CD14-positive monocyte (primary cell): ENCODE measurements at regions of chr11 and their contacts with region 1.

Region 1: GRCh38 chr11:3109921-3110706 is 52.9 kb upstream of the CARS1 start:
- DNase-seq: peak; percentile 29 to 48 (median 35)
- H3K4me3 ChIP-seq: no peak overlapping the region
- H3K4me3 Mint-ChIP-seq: no peak overlapping the region
- H3K27ac ChIP-seq: no peak overlapping the region
- H3K27ac Mint-ChIP-seq: peak overlapping the region in 3 of 7 donors; percentile 15 to 68 (median 63)
- H3K4me1 ChIP-seq: peaks cover 31 to 46% of the 10 kb centered on the region in 2 donors
- H3K4me1 Mint-ChIP-seq: peaks cover 37% of the 10 kb centered on the region
- H3K27me3 ChIP-seq: no peaks in the 10 kb centered on the region
- H3K27me3 Mint-ChIP-seq: peaks cover 0 to 6% (median 2%) of the 10 kb centered on the region in 3 donors
- CTCF ChIP-seq: peak; percentile 81

Region 2: GRCh38 chr11:3091791-3092602 is 18.1 kb before region 1 on chr11:
- intact Hi-C with region 1: no loop called
- DNase-seq: peak; percentile 56 to 78 (median 68)
- H3K4me3 ChIP-seq: no peak overlapping the region
- H3K4me3 Mint-ChIP-seq: no peak overlapping the region
- H3K27ac ChIP-seq: no peak overlapping the region
- H3K27ac Mint-ChIP-seq: peak overlapping the region in 1 of 7 donors; percentile 71
- H3K4me1 ChIP-seq: peaks cover 4 to 6% of the 10 kb centered on the region in 2 donors
- H3K4me1 Mint-ChIP-seq: peaks cover 10% of the 10 kb centered on the region
- H3K27me3 ChIP-seq: no peaks in the 10 kb centered on the region
- H3K27me3 Mint-ChIP-seq: no peaks in the 10 kb centered on the region
- CTCF ChIP-seq: peak; percentile 100

Region 3: DNA sequence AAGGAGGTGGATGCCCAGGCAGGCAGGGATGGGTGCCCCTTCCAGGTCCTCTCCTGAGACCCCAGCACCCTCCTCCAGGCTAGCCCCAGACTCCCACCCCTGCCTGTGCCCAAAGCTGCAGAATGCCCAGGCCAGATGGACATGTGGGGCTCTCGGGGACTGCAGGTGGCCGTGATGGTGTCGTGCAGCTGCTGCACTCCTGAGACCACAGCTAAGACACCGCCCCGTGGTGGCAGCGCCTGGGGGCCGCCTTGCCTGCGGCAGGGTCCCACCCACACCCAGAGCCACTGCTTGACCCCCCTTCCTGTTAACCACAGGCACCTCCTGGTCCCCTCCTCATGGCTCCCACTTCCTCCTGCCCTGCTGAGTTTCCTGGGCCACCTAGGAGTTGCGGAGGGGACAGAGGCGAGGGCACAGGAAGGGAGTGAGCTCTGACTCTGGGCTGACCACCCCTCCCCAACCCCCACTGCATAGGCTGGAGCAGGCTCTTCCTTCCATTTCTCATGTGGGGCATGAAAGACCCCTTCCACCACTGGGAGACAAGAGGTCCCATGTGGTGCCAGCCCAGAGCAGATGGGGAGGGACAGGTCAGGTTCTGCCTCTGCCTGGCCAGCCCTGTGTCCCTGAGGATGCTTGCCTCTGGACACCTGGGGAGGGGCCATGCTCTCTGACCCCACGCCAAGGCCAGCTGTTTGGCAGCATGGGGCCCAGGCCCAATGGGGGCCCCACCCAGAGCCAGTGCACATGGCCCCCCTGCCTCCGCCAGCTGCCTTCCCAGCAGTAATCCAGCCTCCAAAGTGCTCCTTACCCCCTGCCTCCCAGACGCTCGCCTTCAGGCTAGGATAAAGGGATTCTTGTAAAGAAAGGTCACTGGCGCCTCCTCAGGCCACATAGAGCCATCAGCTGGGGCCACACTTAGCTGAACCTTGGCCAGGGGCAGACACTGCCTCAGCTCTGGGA is 25.6 kb after region 1 on chr11:
- intact Hi-C with region 1: no loop called
- DNase-seq: peak in 1 of 3 donors; percentile 6
- H3K4me3 ChIP-seq: no peak overlapping the region
- H3K4me3 Mint-ChIP-seq: no peak overlapping the region
- H3K27ac ChIP-seq: peak overlapping the region in 1 of 2 donors; percentile 22
- H3K27ac Mint-ChIP-seq: peak overlapping the region in 2 of 7 donors; percentile 20 to 68
- H3K4me1 ChIP-seq: peaks cover 47 to 71% of the 10 kb centered on the region in 2 donors
- H3K4me1 Mint-ChIP-seq: peaks cover 48% of the 10 kb centered on the region
- H3K27me3 ChIP-seq: no peaks in the 10 kb centered on the region
- H3K27me3 Mint-ChIP-seq: peaks cover 0 to 3% (median 2%) of the 10 kb centered on the region in 3 donors
- CTCF ChIP-seq: no peak

Region 4: DNA sequence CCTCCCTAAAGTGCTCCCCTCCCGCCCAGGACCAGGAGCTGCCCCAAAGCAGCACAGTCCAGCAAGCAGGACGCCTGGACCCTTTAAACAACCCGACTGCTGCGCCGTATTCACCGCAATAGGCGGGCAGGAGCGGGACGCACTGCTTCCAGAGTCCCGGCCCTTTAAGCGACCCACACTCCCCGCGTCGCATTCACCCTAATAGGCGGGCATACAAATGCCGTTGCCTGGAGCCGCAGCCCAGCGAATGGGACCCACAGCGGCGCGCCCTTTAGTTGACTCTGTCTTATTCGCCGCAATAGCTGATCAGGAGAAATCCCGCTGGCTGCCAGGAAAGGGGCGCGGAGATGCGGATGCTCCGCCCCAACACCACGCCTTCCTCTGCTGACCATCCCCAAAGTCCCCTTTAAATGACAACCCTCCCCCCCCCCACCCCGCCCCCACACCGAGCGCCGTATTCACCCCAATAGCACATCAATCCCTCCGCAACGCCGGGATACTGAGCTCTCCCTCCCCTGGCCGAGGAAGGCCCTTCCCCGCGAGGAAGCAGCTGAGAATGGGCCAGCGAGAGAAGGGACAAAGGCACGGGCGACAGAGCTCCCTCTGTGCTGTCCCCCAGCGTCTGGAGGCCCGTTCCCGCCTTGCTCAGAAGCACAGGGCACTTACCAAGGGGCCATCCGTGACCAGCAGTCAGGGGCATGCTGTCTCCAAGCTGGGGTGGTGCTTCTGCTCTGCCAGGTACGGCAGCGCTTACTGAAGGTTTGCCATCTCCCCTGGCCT is 50.3 kb after region 1 on chr11:
- intact Hi-C with region 1: loop called in 1 of 2 experiments (anchors 5 kb)
- DNase-seq: peak in 1 of 3 donors; percentile 39
- H3K4me3 ChIP-seq: peak overlapping the region; percentile 7 to 60 (median 7)
- H3K4me3 Mint-ChIP-seq: peak overlapping the region; percentile 73 to 83
- H3K27ac ChIP-seq: no peak overlapping the region
- H3K27ac Mint-ChIP-seq: peak overlapping the region in 2 of 7 donors; percentile 8 to 30
- H3K4me1 ChIP-seq: peaks cover 61 to 92% of the 10 kb centered on the region in 2 donors
- H3K4me1 Mint-ChIP-seq: peaks cover 81% of the 10 kb centered on the region
- H3K27me3 ChIP-seq: no peaks in the 10 kb centered on the region
- H3K27me3 Mint-ChIP-seq: peaks cover 1 to 4% (median 4%) of the 10 kb centered on the region in 3 donors
- CTCF ChIP-seq: no peak

Region 5: GRCh38 chr11:3217676-3218482 is 107.8 kb after region 1 on chr11:
- intact Hi-C with region 1: loop called in 1 of 2 experiments (anchors 10 kb)
- DNase-seq: no peak
- H3K4me3 ChIP-seq: no peak overlapping the region
- H3K4me3 Mint-ChIP-seq: no peak overlapping the region
- H3K27ac ChIP-seq: no peak overlapping the region
- H3K27ac Mint-ChIP-seq: no peak overlapping the region
- H3K4me1 ChIP-seq: no peaks in the 10 kb centered on the region
- H3K4me1 Mint-ChIP-seq: peaks cover 7% of the 10 kb centered on the region
- H3K27me3 ChIP-seq: peaks cover 0 to 4% of the 10 kb centered on the region in 2 donors
- H3K27me3 Mint-ChIP-seq: peaks cover 18 to 42% (median 31%) of the 10 kb centered on the region in 3 donors
- CTCF ChIP-seq: no peak